ENCODE measurements at regions of chr5 and their contacts with region 1.

Region 1: GRCh38 chr5:179923436-179923835 is 15.7 kb upstream of the TBC1D9B start:
- DNase-seq: no peak
- H3K4me3 ChIP-seq: no peak overlapping the region
- CTCF ChIP-seq: no peak

Region 2: GRCh38 chr5:179974946-179975712 is 51.7 kb after region 1 on chr5:
- in situ Hi-C with region 1: loop called (anchors 5 kb)
- DNase-seq: no peak
- H3K4me3 ChIP-seq: no peak overlapping the region
- CTCF ChIP-seq: peak; percentile 53

Region 3: GRCh38 chr5:180784497-180785097 is 861.2 kb after region 1 on chr5:
- in situ Hi-C with region 1: no loop called
- DNase-seq: peak; percentile 67
- H3K4me3 ChIP-seq: no peak overlapping the region
- CTCF ChIP-seq: peak; percentile 86

Measured in astrocyte of the cerebellum (primary cell).